ENCODE measurements at regions of chr5 and their contacts with region 1.

Region 1: GRCh38 chr5:143161893-143162540 is 241.5 kb downstream of the NR3C1 start:
- DNase-seq: no peak
- ATAC-seq: no peak
- H3K4me3 ChIP-seq: no peak overlapping the region
- H3K27ac ChIP-seq: no peak overlapping the region
- H3K4me1 ChIP-seq: no peaks in the 10 kb centered on the region; the same call in 1 of the 2 replicates
- H3K27me3 ChIP-seq: no peaks in the 10 kb centered on the region
- CTCF ChIP-seq: no peak
- EP300 ChIP-seq: no peak
- POLR2A ChIP-seq: no peak
- RAD21 ChIP-seq: no peak

Region 2: DNA sequence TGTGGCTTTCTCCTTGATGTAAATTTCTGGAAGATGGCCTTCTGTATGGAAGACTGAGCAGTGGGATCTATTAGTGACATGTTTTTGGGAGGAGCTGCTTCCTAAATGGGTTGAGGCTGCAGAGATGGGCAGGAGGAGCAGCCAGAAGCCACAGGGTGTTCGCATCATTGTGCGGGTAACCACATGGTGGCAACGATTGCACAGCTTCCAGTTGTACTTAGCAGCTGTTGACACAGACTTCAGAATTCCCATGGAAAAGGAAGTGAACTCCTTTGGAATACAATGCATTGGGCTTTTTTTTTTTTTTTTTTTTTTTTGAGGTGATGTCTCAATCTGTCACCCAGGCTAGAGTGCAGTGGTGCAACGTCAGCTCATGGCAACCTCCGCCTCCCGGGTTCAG is 55.8 kb before region 1 on chr5:
- CTCF ChIA-PET with region 1: no interaction called
- POLR2A ChIA-PET with region 1: interaction called, 3 read pairs
- RAD21 ChIA-PET with region 1: no interaction called
- SMC1A ChIA-PET with region 1: interaction called, 10 read pairs
- in situ Hi-C with region 1: no loop called
- intact Hi-C with region 1: no loop called
- DNase-seq: no peak
- ATAC-seq: no peak
- H3K4me3 ChIP-seq: no peak overlapping the region
- H3K27ac ChIP-seq: no peak overlapping the region
- H3K4me1 ChIP-seq: peaks cover 9% of the 10 kb centered on the region
- H3K27me3 ChIP-seq: no peaks in the 10 kb centered on the region
- CTCF ChIP-seq: no peak
- EP300 ChIP-seq: no peak
- POLR2A ChIP-seq: no peak
- RAD21 ChIP-seq: no peak

Region 3: DNA sequence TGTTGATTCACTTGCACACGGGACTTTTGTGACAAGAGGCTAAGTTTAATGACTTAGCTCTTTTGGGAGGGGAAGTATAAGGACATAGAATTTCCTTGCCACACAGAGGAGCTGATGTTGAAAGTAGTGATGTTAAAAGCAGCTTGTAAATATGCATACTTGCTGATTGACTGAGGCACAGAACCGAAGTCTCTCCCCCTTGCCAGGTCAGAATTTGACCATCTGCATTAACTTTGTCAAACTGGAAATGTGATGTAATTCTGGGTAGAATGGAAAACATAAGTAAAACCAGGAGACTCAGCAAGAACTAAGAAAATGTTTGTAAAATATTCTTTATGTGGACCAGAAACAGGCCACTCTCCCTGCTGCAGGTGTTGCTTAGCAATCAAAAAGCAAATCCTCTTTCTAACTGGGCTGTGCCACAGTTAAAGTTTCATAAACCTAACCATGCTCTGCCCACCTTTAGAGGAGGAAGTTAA is 42.7 kb before region 1 on chr5:
- CTCF ChIA-PET with region 1: interaction called, 4 read pairs
- POLR2A ChIA-PET with region 1: interaction called, 3 read pairs
- RAD21 ChIA-PET with region 1: interaction called, 17 read pairs
- SMC1A ChIA-PET with region 1: interaction called, 6 read pairs
- in situ Hi-C with region 1: no loop called
- intact Hi-C with region 1: no loop called
- DNase-seq: no peak
- ATAC-seq: peak; percentile 82
- H3K4me3 ChIP-seq: no peak overlapping the region
- H3K27ac ChIP-seq: peak overlapping the region; percentile 35
- H3K4me1 ChIP-seq: peaks cover 23% of the 10 kb centered on the region
- H3K27me3 ChIP-seq: no peaks in the 10 kb centered on the region
- CTCF ChIP-seq: no peak
- EP300 ChIP-seq: no peak
- POLR2A ChIP-seq: no peak
- RAD21 ChIP-seq: no peak

Region 4: DNA sequence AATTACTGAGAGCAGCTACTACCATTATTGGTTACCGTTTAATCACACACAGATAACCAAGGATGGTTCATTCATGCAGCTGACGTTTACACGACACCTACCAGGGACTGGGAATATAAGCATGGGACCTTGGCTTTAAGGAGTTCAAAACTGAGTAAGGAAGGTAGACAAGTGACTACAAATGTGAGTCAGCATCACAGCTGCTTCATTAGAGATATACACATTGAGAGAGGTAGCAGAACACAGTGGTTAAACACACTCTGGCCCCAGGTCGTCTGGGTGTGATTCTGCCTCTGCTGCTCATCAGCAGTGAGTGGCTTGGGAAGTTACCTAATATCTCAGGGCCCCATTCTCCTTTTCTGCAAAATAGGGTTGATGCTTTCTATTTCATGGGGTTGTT is 27.1 kb before region 1 on chr5:
- CTCF ChIA-PET with region 1: interaction called, 5 read pairs
- POLR2A ChIA-PET with region 1: interaction called, 3 read pairs
- RAD21 ChIA-PET with region 1: interaction called, 3 read pairs
- SMC1A ChIA-PET with region 1: interaction called, 49 read pairs
- in situ Hi-C with region 1: no loop called
- intact Hi-C with region 1: no loop called
- DNase-seq: no peak
- ATAC-seq: peak; percentile 83
- H3K4me3 ChIP-seq: no peak overlapping the region
- H3K27ac ChIP-seq: no peak overlapping the region
- H3K4me1 ChIP-seq: no peaks in the 10 kb centered on the region
- H3K27me3 ChIP-seq: no peaks in the 10 kb centered on the region
- CTCF ChIP-seq: no peak
- EP300 ChIP-seq: no peak
- POLR2A ChIP-seq: no peak
- RAD21 ChIP-seq: no peak

Region 5: GRCh38 chr5:143206196-143207053 is 44.4 kb after region 1 on chr5:
- CTCF ChIA-PET with region 1: no interaction called
- POLR2A ChIA-PET with region 1: interaction called, 5 read pairs
- RAD21 ChIA-PET with region 1: interaction called, 22 read pairs
- SMC1A ChIA-PET with region 1: interaction called, 9 read pairs
- in situ Hi-C with region 1: no loop called
- intact Hi-C with region 1: no loop called
- DNase-seq: peak; percentile 98
- ATAC-seq: peak; percentile 71
- H3K4me3 ChIP-seq: peak overlapping the region; percentile 21; the same call in 1 of the 2 replicates
- H3K27ac ChIP-seq: peak overlapping the region; percentile 94
- H3K4me1 ChIP-seq: peaks cover 52% of the 10 kb centered on the region
- H3K27me3 ChIP-seq: no peaks in the 10 kb centered on the region
- CTCF ChIP-seq: peak in 1 of 3 experiments; percentile 13; a peak in 1 of 6 replicates
- EP300 ChIP-seq: peak; percentile 76 to 91; a peak in 2 of 4 replicates
- POLR2A ChIP-seq: peak; percentile 61; the same call in 1 of the 2 replicates
- RAD21 ChIP-seq: peak; percentile 40

Region 6: GRCh38 chr5:143506881-143507551 is 345.0 kb after region 1 on chr5:
- CTCF ChIA-PET with region 1: no interaction called
- POLR2A ChIA-PET with region 1: no interaction called
- RAD21 ChIA-PET with region 1: no interaction called
- SMC1A ChIA-PET with region 1: no interaction called
- in situ Hi-C with region 1: no loop called
- intact Hi-C with region 1: no loop called
- DNase-seq: no peak
- ATAC-seq: no peak
- H3K4me3 ChIP-seq: no peak overlapping the region
- H3K27ac ChIP-seq: no peak overlapping the region
- H3K4me1 ChIP-seq: peaks cover 14% of the 10 kb centered on the region
- H3K27me3 ChIP-seq: no peaks in the 10 kb centered on the region
- CTCF ChIP-seq: no peak
- EP300 ChIP-seq: no peak
- POLR2A ChIP-seq: no peak
- RAD21 ChIP-seq: no peak